ENCODE measurements at regions of chr10 and their contacts with region 1.

Region 1: DNA sequence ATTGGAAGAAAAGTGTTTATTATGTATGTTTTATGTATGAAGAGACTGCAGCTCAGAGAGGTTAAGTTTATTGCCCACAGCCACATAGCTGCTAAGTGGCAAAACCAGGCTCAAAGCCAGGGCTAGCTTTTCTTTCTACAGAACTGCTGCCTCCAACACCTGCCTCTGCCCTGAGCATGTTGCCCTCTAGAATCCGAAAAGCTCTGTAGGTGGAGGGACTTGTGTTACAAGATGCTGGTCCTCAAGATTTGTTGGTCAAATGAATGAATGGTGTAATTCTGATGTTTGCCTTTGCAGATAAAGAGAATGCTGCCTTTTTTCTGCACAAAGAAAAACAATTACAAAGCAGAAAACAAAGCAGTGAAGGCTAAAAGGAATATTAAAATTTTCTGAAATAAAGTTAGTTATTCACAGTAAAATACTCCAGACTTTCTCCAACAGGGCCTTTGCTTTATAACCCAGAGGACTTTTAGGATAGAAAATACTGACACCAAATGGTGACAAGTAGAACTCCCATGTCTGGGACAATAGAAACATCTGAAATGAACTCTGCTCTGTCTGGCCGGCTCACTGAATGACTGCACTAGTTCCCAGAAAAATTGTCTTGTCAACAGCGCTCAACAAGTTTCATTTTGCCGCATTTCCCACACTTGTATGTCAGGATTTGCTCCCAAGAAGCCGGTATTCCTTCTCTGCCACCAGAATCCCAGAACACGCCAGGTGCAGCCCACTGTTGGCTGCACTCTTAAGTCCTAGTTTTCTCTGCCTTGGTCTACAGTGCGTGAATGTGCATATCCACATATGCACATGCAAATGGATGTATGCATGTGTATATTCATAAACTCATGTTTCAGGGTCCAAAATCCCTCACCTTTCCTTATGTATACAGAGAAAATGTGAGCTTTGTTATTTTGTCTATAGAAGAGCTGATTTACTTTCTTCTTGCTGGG is 11.0 kb upstream of the DNTT start:
- DNase-seq: peak; percentile 76
- ATAC-seq: peak; percentile 67
- H3K4me3 ChIP-seq: no peak overlapping the region
- H3K4me3 Mint-ChIP-seq: no peak overlapping the region
- H3K27ac ChIP-seq: peak overlapping the region in 1 of 2 donors; percentile 4
- H3K27ac Mint-ChIP-seq: no peak overlapping the region
- H3K4me1 ChIP-seq: peaks cover 49 to 52% of the 10 kb centered on the region in 2 donors
- H3K4me1 Mint-ChIP-seq: peaks cover 58% of the 10 kb centered on the region
- H3K27me3 ChIP-seq: no peaks in the 10 kb centered on the region
- H3K27me3 Mint-ChIP-seq: no peaks in the 10 kb centered on the region
- CTCF ChIP-seq: peak; percentile 84

Region 2: GRCh38 chr10:96017191-96017687 is 276.0 kb before region 1 on chr10:
- CTCF ChIA-PET with region 1: interaction called, 25 read pairs
- POLR2A ChIA-PET with region 1: no interaction called
- intact Hi-C with region 1: loop called (anchors 1 kb)
- DNase-seq: peak; percentile 74
- ATAC-seq: peak; percentile 61
- H3K4me3 ChIP-seq: no peak overlapping the region
- H3K4me3 Mint-ChIP-seq: no peak overlapping the region
- H3K27ac ChIP-seq: no peak overlapping the region
- H3K27ac Mint-ChIP-seq: no peak overlapping the region
- H3K4me1 ChIP-seq: peaks cover 0 to 5% of the 10 kb centered on the region in 2 donors
- H3K4me1 Mint-ChIP-seq: peaks cover 4% of the 10 kb centered on the region
- H3K27me3 ChIP-seq: no peaks in the 10 kb centered on the region
- H3K27me3 Mint-ChIP-seq: no peaks in the 10 kb centered on the region
- CTCF ChIP-seq: peak; percentile 85

Region 3: DNA sequence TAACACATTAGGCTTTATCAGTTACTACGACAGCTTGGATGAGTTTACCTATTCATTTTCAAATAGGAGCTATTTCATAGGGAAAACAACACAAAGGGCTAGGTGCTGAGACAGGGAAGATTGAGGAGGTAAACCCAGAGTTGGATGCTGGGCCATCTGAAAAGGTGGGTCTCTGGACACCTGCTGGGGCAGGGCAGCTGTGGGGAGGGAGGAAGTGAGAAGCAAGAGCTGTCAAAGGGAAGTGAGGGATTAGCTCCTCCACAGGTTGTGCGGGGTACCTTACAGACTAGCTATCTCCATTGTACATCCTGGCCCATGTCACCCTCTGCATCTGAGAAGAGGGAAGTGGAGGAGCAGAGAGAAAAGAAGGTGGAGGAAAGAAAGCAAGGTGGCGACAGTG is 70.8 kb before region 1 on chr10:
- CTCF ChIA-PET with region 1: interaction called, 964 read pairs
- POLR2A ChIA-PET with region 1: no interaction called
- intact Hi-C with region 1: no loop called
- DNase-seq: no peak
- ATAC-seq: no peak
- H3K4me3 ChIP-seq: no peak overlapping the region
- H3K4me3 Mint-ChIP-seq: no peak overlapping the region
- H3K27ac ChIP-seq: peak overlapping the region in 1 of 2 donors; percentile 32
- H3K27ac Mint-ChIP-seq: peak overlapping the region; percentile 39
- H3K4me1 ChIP-seq: no peaks in the 10 kb centered on the region
- H3K4me1 Mint-ChIP-seq: peaks cover 5% of the 10 kb centered on the region
- H3K27me3 ChIP-seq: no peaks in the 10 kb centered on the region
- H3K27me3 Mint-ChIP-seq: no peaks in the 10 kb centered on the region
- CTCF ChIP-seq: no peak

Region 4: GRCh38 chr10:96244354-96244753 is 48.9 kb before region 1 on chr10:
- CTCF ChIA-PET with region 1: interaction called, 964 read pairs
- POLR2A ChIA-PET with region 1: interaction called, 5 read pairs
- intact Hi-C with region 1: loop called (anchors 1 kb)
- DNase-seq: peak; percentile 91
- ATAC-seq: peak; percentile 99
- H3K4me3 ChIP-seq: peak overlapping the region in 2 of 5 experiments; percentile 10 to 22
- H3K4me3 Mint-ChIP-seq: peak overlapping the region; percentile 77
- H3K27ac ChIP-seq: peak overlapping the region; percentile 84 to 90
- H3K27ac Mint-ChIP-seq: peak overlapping the region; percentile 91
- H3K4me1 ChIP-seq: peaks cover 65 to 70% of the 10 kb centered on the region in 2 donors
- H3K4me1 Mint-ChIP-seq: peaks cover 76% of the 10 kb centered on the region
- H3K27me3 ChIP-seq: no peaks in the 10 kb centered on the region
- H3K27me3 Mint-ChIP-seq: no peaks in the 10 kb centered on the region
- CTCF ChIP-seq: no peak

Region 5: GRCh38 chr10:96257944-96258343 is 35.3 kb before region 1 on chr10:
- CTCF ChIA-PET with region 1: interaction called, 46 read pairs
- POLR2A ChIA-PET with region 1: no interaction called
- intact Hi-C with region 1: no loop called
- DNase-seq: no peak
- ATAC-seq: no peak
- H3K4me3 ChIP-seq: peak overlapping the region in 1 of 5 experiments; percentile 0
- H3K4me3 Mint-ChIP-seq: peak overlapping the region; percentile 63
- H3K27ac ChIP-seq: peak overlapping the region; percentile 36 to 79
- H3K27ac Mint-ChIP-seq: peak overlapping the region; percentile 87
- H3K4me1 ChIP-seq: peaks cover 79 to 83% of the 10 kb centered on the region in 2 donors
- H3K4me1 Mint-ChIP-seq: peaks cover 76% of the 10 kb centered on the region
- H3K27me3 ChIP-seq: no peaks in the 10 kb centered on the region
- H3K27me3 Mint-ChIP-seq: no peaks in the 10 kb centered on the region
- CTCF ChIP-seq: no peak

Region 6: DNA sequence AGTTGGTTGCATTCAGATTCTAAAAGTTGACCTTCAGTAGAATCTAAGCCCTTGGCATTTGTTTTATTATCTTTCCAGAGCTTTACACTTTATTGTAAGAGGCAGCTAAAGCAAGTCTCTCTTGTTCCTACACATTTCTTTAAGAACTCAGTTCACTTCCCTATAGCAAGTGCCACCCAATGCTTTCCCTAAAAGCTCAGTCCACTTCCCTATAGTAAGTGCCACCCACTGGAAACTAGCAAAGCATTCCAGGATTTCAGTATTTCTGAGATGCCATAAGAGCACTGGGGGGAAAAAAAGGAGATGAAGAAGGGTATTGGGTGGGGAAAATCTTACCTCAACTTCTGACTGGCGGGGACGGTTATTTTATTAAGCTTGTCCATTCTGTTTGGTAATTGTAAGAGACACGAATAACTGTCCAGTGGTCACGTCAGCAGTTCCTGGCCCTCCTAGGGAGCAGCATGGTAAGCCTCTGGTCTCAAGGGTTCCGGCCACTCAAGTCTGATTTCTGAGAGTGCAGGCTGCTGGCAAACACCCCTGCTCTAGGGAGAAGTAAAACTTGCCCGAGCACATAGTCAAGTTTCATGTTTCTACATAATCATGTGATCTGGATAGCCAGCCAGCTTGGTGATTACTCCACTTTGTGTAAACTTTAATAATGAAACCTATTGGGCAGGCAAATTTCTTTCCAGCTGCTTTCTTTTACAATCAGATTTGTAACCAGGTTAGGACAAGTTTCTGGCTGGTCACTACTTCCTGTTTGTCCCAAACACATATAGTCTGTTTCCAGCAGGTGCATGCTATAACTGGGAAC is 22.0 kb before region 1 on chr10 and contains the start of gene BLNK:
- CTCF ChIA-PET with region 1: interaction called, 122 read pairs
- POLR2A ChIA-PET with region 1: interaction called, 48 read pairs
- intact Hi-C with region 1: loop called (anchors 1 kb)
- DNase-seq: peak; percentile 82
- ATAC-seq: peak; percentile 54
- H3K4me3 ChIP-seq: peak within 1 kb of the TSS; percentile 73 to 97 (median 96)
- H3K4me3 Mint-ChIP-seq: peak within 1 kb of the TSS; percentile 97
- H3K27ac ChIP-seq: peak within 1 kb of the TSS; percentile 79 to 88
- H3K27ac Mint-ChIP-seq: peak within 1 kb of the TSS; percentile 99
- H3K4me1 ChIP-seq: peaks cover 61 to 63% of the 10 kb centered on the region in 2 donors
- H3K4me1 Mint-ChIP-seq: peaks cover 80% of the 10 kb centered on the region
- H3K27me3 ChIP-seq: no peaks in the 10 kb centered on the region
- H3K27me3 Mint-ChIP-seq: no peaks in the 10 kb centered on the region
- CTCF ChIP-seq: no peak
- total RNA-seq, gene BLNK: 205 and 210 TPM in 2 replicates

Region 7: GRCh38 chr10:96319754-96320474 is 26.7 kb after region 1 on chr10:
- CTCF ChIA-PET with region 1: interaction called, 15 read pairs
- POLR2A ChIA-PET with region 1: no interaction called
- intact Hi-C with region 1: no loop called
- DNase-seq: no peak
- ATAC-seq: no peak
- H3K4me3 ChIP-seq: no peak overlapping the region
- H3K4me3 Mint-ChIP-seq: no peak overlapping the region
- H3K27ac ChIP-seq: no peak overlapping the region
- H3K27ac Mint-ChIP-seq: no peak overlapping the region
- H3K4me1 ChIP-seq: no peaks in the 10 kb centered on the region
- H3K4me1 Mint-ChIP-seq: no peaks in the 10 kb centered on the region
- H3K27me3 ChIP-seq: peaks cover 0 to 5% (median 0%) of the 10 kb centered on the region in 4 experiments
- H3K27me3 Mint-ChIP-seq: peaks cover 27% of the 10 kb centered on the region
- CTCF ChIP-seq: no peak

Region 8: DNA sequence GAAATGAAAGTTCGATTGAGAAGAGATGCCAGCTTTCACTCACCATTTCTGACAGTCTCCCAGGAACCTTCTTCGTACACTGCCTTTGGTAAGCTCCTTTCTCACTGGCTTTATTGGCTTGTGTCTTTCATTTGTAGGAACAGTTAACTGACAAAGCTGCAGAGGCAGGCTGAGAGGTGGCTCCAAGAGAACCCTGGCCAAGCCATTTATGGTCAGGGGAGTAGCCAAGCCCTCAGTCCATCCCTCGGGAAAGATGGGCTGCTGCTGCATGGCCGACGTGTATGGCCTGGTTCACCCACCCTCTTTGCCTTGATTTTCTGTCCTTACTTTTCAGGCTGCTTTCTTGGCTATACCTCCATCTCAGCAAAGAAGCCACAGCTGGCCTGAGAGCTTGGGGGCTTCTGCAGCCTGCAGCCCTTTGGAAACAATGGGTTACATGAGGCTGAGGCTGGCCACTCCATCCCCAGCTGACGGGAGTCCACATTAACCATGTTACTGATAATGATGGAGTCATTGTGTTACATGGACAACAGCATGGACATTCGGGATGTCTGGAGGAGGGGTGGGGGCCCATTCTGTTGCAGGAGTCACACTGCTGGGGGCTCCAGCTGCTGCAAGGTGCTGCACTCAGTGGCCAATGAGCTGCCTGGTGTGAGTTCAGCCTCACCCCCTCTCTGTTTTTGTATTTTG is 65.8 kb after region 1 on chr10 and contains the start of gene OPALIN:
- CTCF ChIA-PET with region 1: no interaction called
- POLR2A ChIA-PET with region 1: no interaction called
- intact Hi-C with region 1: no loop called
- DNase-seq: no peak
- ATAC-seq: no peak
- H3K4me3 ChIP-seq: no peak within 1 kb of the TSS
- H3K4me3 Mint-ChIP-seq: no peak within 1 kb of the TSS
- H3K27ac ChIP-seq: no peak within 1 kb of the TSS
- H3K27ac Mint-ChIP-seq: no peak within 1 kb of the TSS
- H3K4me1 ChIP-seq: no peaks in the 10 kb centered on the region
- H3K4me1 Mint-ChIP-seq: no peaks in the 10 kb centered on the region
- H3K27me3 ChIP-seq: peaks cover 0 to 10% (median 2%) of the 10 kb centered on the region in 4 experiments
- H3K27me3 Mint-ChIP-seq: peaks cover 19% of the 10 kb centered on the region
- CTCF ChIP-seq: no peak
- total RNA-seq, gene OPALIN: not detected in 2 replicates